CD4-positive, alpha-beta memory T cell (primary cell): ENCODE measurements at regions of chr1 and their contacts with region 1.

Region 1: DNA sequence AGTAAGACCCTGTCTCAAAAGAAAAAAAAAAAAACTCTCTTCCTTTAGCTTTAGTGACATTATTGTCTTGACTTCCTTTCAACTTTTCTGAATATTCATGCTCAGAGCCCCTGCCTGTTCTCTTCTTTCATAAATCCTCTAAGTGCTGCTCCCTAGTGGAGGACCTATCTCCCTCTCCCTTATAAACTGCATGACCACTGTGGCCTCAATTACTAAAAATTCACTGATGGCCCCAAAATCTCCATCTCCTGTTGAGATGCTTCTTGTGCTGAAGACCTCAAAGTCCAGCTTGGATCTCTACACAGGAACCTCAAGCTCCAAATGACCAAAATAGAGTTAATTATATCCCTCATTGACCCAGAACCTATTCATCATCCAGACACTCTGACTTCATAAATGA is 7.8 kb downstream of the ITLN1 start:
- DNase-seq: peak in 4 of 5 donors; percentile 45 to 56 (median 54)
- H3K4me3 ChIP-seq: no peak overlapping the region
- H3K4me3 Mint-ChIP-seq: peak overlapping the region in 1 of 8 donors; percentile 15
- H3K27ac ChIP-seq: no peak overlapping the region
- H3K27ac Mint-ChIP-seq: peak overlapping the region in 2 of 7 donors; percentile 1 to 2
- H3K4me1 ChIP-seq: peaks cover 7% of the 10 kb centered on the region
- H3K4me1 Mint-ChIP-seq: peaks cover 5 to 22% (median 6%) of the 10 kb centered on the region in 4 donors
- H3K27me3 ChIP-seq: no peaks in the 10 kb centered on the region
- H3K27me3 Mint-ChIP-seq: peaks cover 0 to 6% of the 10 kb centered on the region in 2 donors

Region 2: GRCh38 chr1:160726498-160727315 is 150.5 kb before region 1 on chr1:
- CTCF ChIA-PET with region 1: no interaction called
- POLR2A ChIA-PET with region 1: no interaction called
- intact Hi-C with region 1: loop called (anchors 1 kb)
- DNase-seq: peak; percentile 67 to 76 (median 74)
- H3K4me3 ChIP-seq: no peak overlapping the region
- H3K4me3 Mint-ChIP-seq: no peak overlapping the region
- H3K27ac ChIP-seq: no peak overlapping the region
- H3K27ac Mint-ChIP-seq: no peak overlapping the region
- H3K4me1 ChIP-seq: peaks cover 24% of the 10 kb centered on the region
- H3K4me1 Mint-ChIP-seq: peaks cover 11 to 20% (median 15%) of the 10 kb centered on the region in 4 donors
- H3K27me3 ChIP-seq: no peaks in the 10 kb centered on the region
- H3K27me3 Mint-ChIP-seq: no peaks in the 10 kb centered on the region

Region 3: GRCh38 chr1:160830321-160831153 is 46.7 kb before region 1 on chr1:
- CTCF ChIA-PET with region 1: interaction called, 184 read pairs
- POLR2A ChIA-PET with region 1: no interaction called
- intact Hi-C with region 1: no loop called
- DNase-seq: peak; percentile 62 to 75 (median 70)
- H3K4me3 ChIP-seq: no peak overlapping the region
- H3K4me3 Mint-ChIP-seq: no peak overlapping the region
- H3K27ac ChIP-seq: no peak overlapping the region
- H3K27ac Mint-ChIP-seq: peak overlapping the region in 6 of 7 donors; percentile 74 to 86 (median 82)
- H3K4me1 ChIP-seq: peaks cover 6% of the 10 kb centered on the region
- H3K4me1 Mint-ChIP-seq: peaks cover 13 to 35% (median 24%) of the 10 kb centered on the region in 4 donors
- H3K27me3 ChIP-seq: no peaks in the 10 kb centered on the region
- H3K27me3 Mint-ChIP-seq: no peaks in the 10 kb centered on the region

Region 4: GRCh38 chr1:160862203-160863060 is 14.8 kb before region 1 on chr1 and contains the start of gene CD244:
- CTCF ChIA-PET with region 1: interaction called, 10 read pairs
- POLR2A ChIA-PET with region 1: no interaction called
- intact Hi-C with region 1: no loop called
- DNase-seq: peak in 4 of 5 donors; percentile 13 to 53 (median 27)
- H3K4me3 ChIP-seq: no peak within 1 kb of the TSS
- H3K4me3 Mint-ChIP-seq: peak within 1 kb of the TSS in 5 of 8 donors; percentile 30 to 67 (median 36)
- H3K27ac ChIP-seq: no peak within 1 kb of the TSS
- H3K27ac Mint-ChIP-seq: peak within 1 kb of the TSS in 5 of 7 donors; percentile 35 to 77 (median 72)
- H3K4me1 ChIP-seq: peaks cover 12% of the 10 kb centered on the region
- H3K4me1 Mint-ChIP-seq: peaks cover 5 to 25% (median 15%) of the 10 kb centered on the region in 4 donors
- H3K27me3 ChIP-seq: no peaks in the 10 kb centered on the region
- H3K27me3 Mint-ChIP-seq: no peaks in the 10 kb centered on the region
- total RNA-seq, gene CD244: not detected